ENCODE measurements at regions of chr11 and their contacts with region 1.

Region 1: GRCh38 chr11:11157185-11157584 is 195.9 kb downstream of the CSNK2A3 start:
- DNase-seq: no peak
- H3K4me3 ChIP-seq: no peak overlapping the region
- H3K27ac ChIP-seq: no peak overlapping the region
- H3K4me1 ChIP-seq: peaks cover 0 to 2% (median 0%) of the 10 kb centered on the region in 4 experiments; a peak in 2 of 7 replicates
- H3K27me3 ChIP-seq: no peaks in the 10 kb centered on the region
- CTCF ChIP-seq: peak; percentile 51 to 64 (median 60)
- EP300 ChIP-seq: no peak
- POLR2A ChIP-seq: no peak
- RAD21 ChIP-seq: peak; percentile 45 to 56

Region 2: GRCh38 chr11:10716127-10716526 is 441.1 kb before region 1 on chr11:
- CTCF ChIA-PET with region 1: no interaction called
- POLR2A ChIA-PET with region 1: no interaction called
- DNase-seq: no peak
- H3K4me3 ChIP-seq: no peak overlapping the region
- H3K27ac ChIP-seq: no peak overlapping the region
- H3K4me1 ChIP-seq: no peaks in the 10 kb centered on the region
- H3K27me3 ChIP-seq: no peaks in the 10 kb centered on the region
- CTCF ChIP-seq: no peak
- EP300 ChIP-seq: no peak
- POLR2A ChIP-seq: no peak
- RAD21 ChIP-seq: no peak

Region 3: GRCh38 chr11:11135820-11136465 is 21.2 kb before region 1 on chr11:
- CTCF ChIA-PET with region 1: interaction called, 26 read pairs
- POLR2A ChIA-PET with region 1: no interaction called
- DNase-seq: no peak
- H3K4me3 ChIP-seq: no peak overlapping the region
- H3K27ac ChIP-seq: no peak overlapping the region
- H3K4me1 ChIP-seq: peaks cover 0 to 2% (median 0%) of the 10 kb centered on the region in 4 experiments; a peak in 1 of 7 replicates
- H3K27me3 ChIP-seq: no peaks in the 10 kb centered on the region
- CTCF ChIP-seq: no peak
- EP300 ChIP-seq: no peak
- POLR2A ChIP-seq: no peak
- RAD21 ChIP-seq: no peak

Region 4: GRCh38 chr11:11173316-11174025 is 16.3 kb after region 1 on chr11:
- CTCF ChIA-PET with region 1: interaction called, 36 read pairs
- POLR2A ChIA-PET with region 1: no interaction called
- DNase-seq: no peak
- H3K4me3 ChIP-seq: no peak overlapping the region
- H3K27ac ChIP-seq: no peak overlapping the region
- H3K4me1 ChIP-seq: 0 out of 7 replicates have a peak, but pooled peaks cover 0 to 3% (median 0%) of the 10 kb centered on the region in 4 experiments
- H3K27me3 ChIP-seq: peaks cover 0 to 3% (median 0%) of the 10 kb centered on the region in 4 experiments; a peak in 2 of 7 replicates
- CTCF ChIP-seq: no peak
- EP300 ChIP-seq: no peak
- POLR2A ChIP-seq: no peak
- RAD21 ChIP-seq: no peak

Region 5: DNA sequence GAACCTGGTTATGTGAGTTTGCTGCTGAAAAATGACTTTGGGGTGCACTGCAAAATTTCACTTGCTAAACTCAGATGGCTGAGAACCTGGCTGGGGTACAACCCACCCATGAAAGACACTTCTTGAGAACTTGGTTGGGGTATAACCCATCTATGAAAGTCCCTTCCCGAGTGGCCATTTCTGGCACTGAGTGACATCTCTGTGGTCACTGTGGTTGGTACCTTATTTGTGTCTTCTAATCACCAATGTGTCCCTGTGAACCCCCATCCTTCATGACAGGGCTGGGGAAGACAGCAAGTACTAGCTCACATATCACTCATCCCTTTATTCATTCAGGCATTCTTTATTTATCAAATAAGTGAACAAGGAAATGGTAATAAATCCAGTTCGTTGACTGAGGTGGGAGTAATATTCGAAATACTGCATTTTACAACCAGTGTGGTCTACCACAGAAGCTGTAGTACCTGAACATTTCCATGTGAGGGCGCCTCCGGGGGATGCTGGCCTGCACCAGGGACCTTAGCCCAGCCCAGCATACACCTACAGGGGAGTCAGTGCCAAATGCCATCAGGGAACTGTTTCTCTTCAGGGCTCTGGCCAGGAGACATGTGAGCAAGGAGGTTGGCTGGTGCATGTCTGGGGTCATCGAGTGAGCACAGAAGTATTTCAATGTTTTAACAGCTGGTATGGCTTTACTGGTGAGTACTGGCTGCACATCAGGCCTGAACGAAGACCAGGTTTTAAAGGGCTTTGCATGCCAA is 73.8 kb after region 1 on chr11:
- CTCF ChIA-PET with region 1: interaction called, 32 read pairs
- POLR2A ChIA-PET with region 1: no interaction called
- DNase-seq: peak in 1 of 2 experiments; percentile 79
- H3K4me3 ChIP-seq: no peak overlapping the region
- H3K27ac ChIP-seq: no peak overlapping the region
- H3K4me1 ChIP-seq: no peaks in the 10 kb centered on the region
- H3K27me3 ChIP-seq: peaks cover 0 to 4% (median 0%) of the 10 kb centered on the region in 4 experiments; a peak in 2 of 7 replicates
- CTCF ChIP-seq: peak; percentile 86 to 87 (median 86)
- EP300 ChIP-seq: no peak
- POLR2A ChIP-seq: no peak
- RAD21 ChIP-seq: peak; percentile 76 to 86